Aorta (tissue), 5 donors: ENCODE measurements at regions of chr4 and their contacts with region 1.

Region 1: GRCh38 chr4:68963374-68963773 is 11.8 kb upstream of the UGT2A3 start:
- DNase-seq: no peak
- ATAC-seq: no peak
- H3K4me3 ChIP-seq: no peak overlapping the region
- H3K27ac ChIP-seq: no peak overlapping the region
- H3K4me1 ChIP-seq: no peaks in the 10 kb centered on the region
- H3K27me3 ChIP-seq: no peaks in the 10 kb centered on the region

Region 2: DNA sequence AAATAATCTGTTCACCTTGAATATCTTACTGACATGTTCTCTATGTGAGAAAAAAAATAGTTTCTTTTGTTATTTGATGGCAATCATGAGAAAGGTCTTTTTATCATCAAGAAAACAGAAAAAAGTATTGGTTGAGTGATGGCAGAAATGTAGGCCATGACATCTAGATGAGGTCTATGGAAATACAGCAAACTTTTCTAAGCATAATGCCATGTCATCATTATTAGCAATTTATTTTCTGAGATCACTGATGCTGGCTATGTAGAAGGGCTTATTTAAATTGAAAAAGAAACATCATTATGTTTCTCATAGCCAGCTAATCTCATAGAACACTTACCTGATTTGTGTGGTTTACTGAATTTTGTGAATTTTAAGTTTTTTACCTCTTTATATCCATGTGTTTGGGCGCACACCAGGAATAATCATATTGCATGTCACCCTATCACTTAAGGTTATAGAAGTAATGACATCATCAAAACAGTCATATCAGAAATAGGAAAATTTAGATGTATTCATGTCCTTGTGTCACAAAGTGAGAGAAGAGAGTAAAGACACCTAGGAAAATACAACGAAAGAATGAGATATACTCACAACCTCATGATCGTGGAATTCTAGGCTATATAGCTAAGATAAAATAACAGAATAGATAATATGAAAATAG is 34.2 kb before region 1 on chr4:
- intact Hi-C with region 1: loop called in 1 of 2 experiments (anchors 1 kb)
- DNase-seq: no peak
- ATAC-seq: no peak
- H3K4me3 ChIP-seq: no peak overlapping the region
- H3K27ac ChIP-seq: no peak overlapping the region
- H3K4me1 ChIP-seq: no peaks in the 10 kb centered on the region
- H3K27me3 ChIP-seq: no peaks in the 10 kb centered on the region